Left lung (tissue), 14 donors: ENCODE measurements at regions of chr10 and their contacts with region 1.

Region 1: GRCh38 chr10:89793649-89794254 is 92.4 kb downstream of the KIF20B start:
- DNase-seq: peak in 2 of 4 donors; percentile 68 to 82
- ATAC-seq: peak; percentile 94
- H3K4me3 ChIP-seq: no peak overlapping the region
- H3K27ac ChIP-seq: no peak overlapping the region
- H3K4me1 ChIP-seq: no peaks in the 10 kb centered on the region
- H3K27me3 ChIP-seq: no peaks in the 10 kb centered on the region
- CTCF ChIP-seq: peak; percentile 69 to 80

Region 2: GRCh38 chr10:89283936-89284475 is 509.7 kb before region 1 on chr10:
- intact Hi-C with region 1: no loop called
- DNase-seq: peak in 3 of 4 donors; percentile 44 to 86 (median 65)
- ATAC-seq: peak; percentile 86
- H3K4me3 ChIP-seq: no peak overlapping the region
- H3K27ac ChIP-seq: peak overlapping the region; percentile 61 to 79
- H3K4me1 ChIP-seq: peaks cover 14 to 16% of the 10 kb centered on the region in 2 donors
- H3K27me3 ChIP-seq: no peaks in the 10 kb centered on the region
- CTCF ChIP-seq: no peak

Region 3: DNA sequence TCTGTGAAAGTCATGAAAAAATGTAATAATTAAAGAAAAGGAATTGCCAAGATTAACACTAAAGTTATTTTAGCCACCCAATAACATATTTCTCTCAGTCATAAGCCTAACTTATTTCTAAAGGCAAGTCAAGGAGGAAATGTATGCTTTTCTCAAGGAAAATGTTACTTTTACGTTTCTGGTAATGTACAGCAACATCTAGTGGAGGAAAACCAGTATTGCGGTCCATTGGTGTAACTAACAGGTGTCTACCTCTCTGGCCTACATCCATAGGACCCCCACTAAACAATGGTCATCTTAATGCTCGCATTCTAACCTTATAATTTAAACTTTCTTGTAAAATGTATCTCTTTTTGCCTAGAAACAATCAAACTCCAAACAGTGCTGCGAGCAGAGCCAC is 345.1 kb after region 1 on chr10:
- intact Hi-C with region 1: loop called in 1 of 2 experiments (anchors 10 kb)
- DNase-seq: no peak
- ATAC-seq: no peak
- H3K4me3 ChIP-seq: no peak overlapping the region
- H3K27ac ChIP-seq: no peak overlapping the region
- H3K4me1 ChIP-seq: no peaks in the 10 kb centered on the region
- H3K27me3 ChIP-seq: no peaks in the 10 kb centered on the region
- CTCF ChIP-seq: peak; percentile 17 to 22

Region 4: DNA sequence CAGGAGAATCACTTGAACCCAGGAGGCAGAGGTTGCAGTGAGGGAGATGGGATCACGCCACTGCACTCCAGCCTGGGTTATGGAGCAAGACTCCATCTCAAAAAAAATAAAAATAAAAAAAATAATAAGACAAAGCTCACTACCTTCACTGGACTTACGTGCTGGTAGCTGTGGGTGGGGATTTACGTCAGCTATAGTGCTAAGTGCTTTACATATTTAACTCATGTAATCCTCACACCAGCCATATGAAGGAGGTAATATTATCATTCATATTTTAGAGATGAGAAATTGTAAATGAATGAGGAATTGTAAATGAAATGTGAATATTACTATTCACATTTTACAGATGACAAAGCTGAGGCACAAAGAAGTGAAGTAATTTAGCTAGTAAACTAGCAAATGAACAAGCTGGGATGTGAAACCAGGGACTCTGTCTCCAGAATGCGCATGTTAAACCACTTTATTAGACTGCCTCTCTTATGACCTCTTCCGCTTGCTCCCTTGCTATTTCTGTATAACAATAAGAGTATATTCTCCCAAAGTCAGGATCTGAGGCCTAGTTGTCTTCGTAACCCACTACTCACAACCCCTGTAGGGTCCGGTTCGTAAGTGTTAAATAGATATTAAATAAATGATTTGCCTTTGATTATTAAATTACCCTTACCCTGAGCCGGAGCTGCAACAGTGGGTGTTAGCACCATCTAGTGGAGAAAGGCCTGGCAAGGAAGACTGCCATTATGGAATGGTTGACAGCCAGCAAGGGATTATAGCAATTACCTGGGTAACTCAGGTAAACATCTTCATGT is 993.8 kb after region 1 on chr10:
- intact Hi-C with region 1: loop called in 1 of 2 experiments (anchors 10 kb)
- DNase-seq: peak in 2 of 4 donors; percentile 28 to 32
- ATAC-seq: peak; percentile 81
- H3K4me3 ChIP-seq: no peak overlapping the region
- H3K27ac ChIP-seq: no peak overlapping the region
- H3K4me1 ChIP-seq: no peaks in the 10 kb centered on the region
- H3K27me3 ChIP-seq: no peaks in the 10 kb centered on the region
- CTCF ChIP-seq: peak; percentile 66 to 69